HCT116 (cell line): ENCODE measurements at regions of chr7 and their contacts with region 1.

Region 1: DNA sequence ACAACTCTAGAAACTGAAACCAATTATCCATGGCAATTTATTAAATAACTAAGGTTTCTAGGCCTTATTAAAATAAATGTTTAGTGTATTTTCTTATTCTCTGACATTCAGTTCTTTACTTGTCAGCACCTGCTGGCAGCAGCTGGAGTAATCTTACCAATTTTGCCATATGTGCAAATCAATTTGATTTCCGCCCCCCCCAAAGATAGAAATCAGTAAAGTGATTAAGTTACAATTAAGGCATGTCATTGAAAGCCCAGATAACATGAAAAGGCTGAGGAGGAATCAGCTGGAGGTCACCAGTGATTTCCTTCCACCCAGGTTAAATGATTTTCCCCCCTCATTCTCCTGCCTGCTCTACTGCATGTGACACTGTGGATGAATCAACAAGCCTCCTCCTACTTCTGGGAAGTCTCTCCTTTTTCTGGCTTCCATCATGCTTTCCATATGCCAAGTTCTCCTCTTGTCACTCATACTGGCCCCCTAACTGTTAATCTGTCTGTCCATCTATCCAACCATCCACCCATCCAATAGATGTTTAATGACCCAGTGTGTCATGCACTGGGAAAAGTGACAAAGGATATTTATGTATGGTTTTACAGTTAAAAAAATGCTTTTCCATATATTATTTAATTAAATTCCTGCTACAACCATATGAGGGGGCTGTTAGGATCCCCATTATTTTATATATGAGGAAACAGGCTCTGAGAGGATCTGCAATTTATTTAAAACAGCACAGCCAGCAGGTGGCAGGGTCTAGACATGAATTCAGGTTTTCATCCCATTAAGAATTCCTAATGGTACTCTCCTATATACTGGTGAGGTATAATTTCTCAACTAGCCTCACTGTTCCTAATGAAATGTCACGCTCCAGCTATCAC is 116.5 kb downstream of the ATXN7L1 start:
- DNase-seq: peak; percentile 45
- ATAC-seq: peak; percentile 83
- H3K4me3 ChIP-seq: no peak overlapping the region
- H3K27ac ChIP-seq: no peak overlapping the region
- H3K4me1 ChIP-seq: peaks cover 0 to 13% of the 10 kb centered on the region in 2 experiments; a peak in 1 of 4 replicates
- H3K27me3 ChIP-seq: no peaks in the 10 kb centered on the region
- CTCF ChIP-seq: peak; percentile 44 to 96 (median 74)
- POLR2A ChIP-seq: no peak
- RAD21 ChIP-seq: peak; percentile 94

Region 2: GRCh38 chr7:104299323-104299722 is 1460.6 kb before region 1 on chr7:
- CTCF ChIA-PET with region 1: no interaction called
- POLR2A ChIA-PET with region 1: no interaction called
- RAD21 ChIA-PET with region 1: no interaction called
- intact Hi-C with region 1: no loop called
- DNase-seq: no peak
- ATAC-seq: no peak
- H3K4me3 ChIP-seq: no peak overlapping the region
- H3K27ac ChIP-seq: no peak overlapping the region
- H3K4me1 ChIP-seq: no peaks in the 10 kb centered on the region
- H3K27me3 ChIP-seq: peaks cover 23% of the 10 kb centered on the region
- CTCF ChIP-seq: no peak
- POLR2A ChIP-seq: no peak
- RAD21 ChIP-seq: no peak

Region 3: DNA sequence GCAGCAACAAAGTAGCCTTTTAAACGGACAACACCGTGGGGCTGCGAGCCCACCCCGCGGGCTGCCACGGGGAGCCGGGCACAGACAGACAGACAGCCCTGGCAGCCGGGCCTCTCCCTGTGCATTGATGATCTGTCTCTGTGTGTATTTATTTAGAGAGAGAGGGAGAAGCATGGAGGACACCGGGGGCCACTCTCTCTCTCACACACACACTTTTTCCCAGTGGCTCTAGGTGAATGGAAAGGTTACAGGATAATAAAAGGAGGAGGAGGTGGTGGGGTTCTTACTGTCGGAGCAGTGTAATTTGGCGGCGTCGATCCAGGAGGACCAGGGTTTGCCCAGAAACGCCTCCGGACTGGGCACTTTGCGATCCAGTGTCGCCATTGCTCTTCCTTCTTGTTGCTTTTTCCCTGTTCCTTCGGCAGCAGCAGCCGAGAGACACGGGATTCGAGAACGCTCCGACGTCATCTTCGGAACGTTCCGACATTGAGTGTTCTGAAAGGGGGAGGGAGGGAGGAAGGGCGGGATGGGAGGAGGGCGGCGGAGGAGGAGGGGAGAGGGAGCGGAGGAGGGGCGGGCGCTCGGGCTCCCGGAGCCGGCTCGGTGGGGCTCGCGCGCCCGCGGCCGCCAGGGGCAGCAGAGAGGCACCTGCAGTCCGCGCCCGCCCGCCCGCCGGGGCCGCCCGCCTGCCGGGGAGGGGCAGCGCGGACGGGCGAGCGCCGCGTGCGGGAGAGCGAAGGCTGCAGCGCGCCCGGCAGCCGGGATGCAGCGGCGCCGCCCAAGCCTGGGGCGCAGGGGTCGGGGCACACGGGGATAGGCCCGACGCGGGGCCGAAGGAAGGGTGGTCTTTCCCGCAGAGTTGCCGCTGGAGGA is 116.4 kb after region 1 on chr7 and contains the start of gene ATXN7L1:
- CTCF ChIA-PET with region 1: interaction called, 7 read pairs
- POLR2A ChIA-PET with region 1: no interaction called
- RAD21 ChIA-PET with region 1: no interaction called
- intact Hi-C with region 1: loop called (anchors 5 kb)
- DNase-seq: peak; percentile 95
- ATAC-seq: peak; percentile 89
- H3K4me3 ChIP-seq: peak within 1 kb of the TSS; percentile 87 to 92
- H3K27ac ChIP-seq: peak within 1 kb of the TSS; percentile 76
- H3K4me1 ChIP-seq: peaks cover 11 to 36% of the 10 kb centered on the region in 2 experiments
- H3K27me3 ChIP-seq: no peaks in the 10 kb centered on the region
- CTCF ChIP-seq: peak in 1 of 3 experiments; percentile 33; a peak in 1 of 6 replicates
- POLR2A ChIP-seq: peak; percentile 86
- RAD21 ChIP-seq: no peak
- total RNA-seq, gene ATXN7L1: 11.5 TPM

Region 4: GRCh38 chr7:105934572-105935185 is 174.8 kb after region 1 on chr7:
- CTCF ChIA-PET with region 1: no interaction called
- POLR2A ChIA-PET with region 1: no interaction called
- RAD21 ChIA-PET with region 1: no interaction called
- intact Hi-C with region 1: loop called (anchors 2 kb)
- DNase-seq: peak; percentile 7
- ATAC-seq: peak; percentile 83
- H3K4me3 ChIP-seq: no peak overlapping the region
- H3K27ac ChIP-seq: no peak overlapping the region
- H3K4me1 ChIP-seq: no peaks in the 10 kb centered on the region
- H3K27me3 ChIP-seq: no peaks in the 10 kb centered on the region
- CTCF ChIP-seq: peak; percentile 25 to 33 (median 29); a peak in 4 of 6 replicates
- POLR2A ChIP-seq: no peak
- RAD21 ChIP-seq: peak; percentile 56

Region 5: DNA sequence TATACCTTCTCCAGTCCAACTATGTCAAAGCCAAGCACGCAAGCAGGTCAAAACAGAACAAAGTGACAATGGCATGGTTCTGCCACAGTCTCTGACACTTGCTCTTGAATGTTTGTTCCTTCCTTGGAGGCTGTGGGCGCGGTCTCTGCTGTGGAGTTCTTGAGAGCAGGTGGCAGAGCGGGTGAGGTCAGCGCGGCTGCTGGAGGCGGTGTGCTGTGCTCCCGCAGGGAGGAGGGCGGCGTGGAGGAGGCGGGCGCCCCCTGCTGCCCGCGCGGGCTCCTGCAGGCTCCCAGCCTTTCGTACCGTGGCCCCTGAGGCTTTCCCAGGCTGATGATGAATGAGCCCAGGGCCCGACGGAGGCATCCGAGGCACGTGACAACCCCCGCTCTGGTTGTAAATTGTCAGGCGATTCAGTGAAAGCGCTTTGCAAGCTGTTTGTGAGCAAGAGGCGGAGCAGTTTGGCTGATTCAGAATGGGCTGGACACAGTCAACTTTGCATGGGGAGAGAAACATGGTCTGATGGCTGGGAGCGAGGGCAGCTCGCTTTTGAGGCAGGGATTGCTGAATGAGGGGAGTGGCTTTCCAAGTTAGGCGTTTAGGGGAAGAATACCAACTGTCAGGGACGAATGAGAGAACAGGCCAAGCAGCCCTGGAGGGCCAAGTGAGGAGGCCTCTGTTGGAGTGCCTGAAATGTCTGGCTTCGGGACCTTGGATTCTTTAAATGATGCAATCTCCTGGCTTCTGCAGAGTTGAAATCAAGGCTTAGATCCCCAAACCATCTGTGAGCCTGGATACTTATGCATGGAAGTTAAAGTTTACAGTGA is 249.7 kb after region 1 on chr7:
- CTCF ChIA-PET with region 1: interaction called, 9 read pairs
- POLR2A ChIA-PET with region 1: no interaction called
- RAD21 ChIA-PET with region 1: no interaction called
- intact Hi-C with region 1: loop called (anchors 1 kb)
- DNase-seq: peak; percentile 63
- ATAC-seq: peak; percentile 99
- H3K4me3 ChIP-seq: peak overlapping the region in 1 of 2 experiments; percentile 19; a peak in 2 of 4 replicates
- H3K27ac ChIP-seq: no peak overlapping the region
- H3K4me1 ChIP-seq: peaks cover 8 to 12% of the 10 kb centered on the region in 2 experiments; a peak in 3 of 4 replicates
- H3K27me3 ChIP-seq: no peaks in the 10 kb centered on the region
- CTCF ChIP-seq: peak; percentile 96 to 98 (median 97)
- POLR2A ChIP-seq: no peak
- RAD21 ChIP-seq: peak; percentile 98

Region 6: GRCh38 chr7:106041140-106041717 is 281.3 kb after region 1 on chr7:
- CTCF ChIA-PET with region 1: interaction called, 21 read pairs
- POLR2A ChIA-PET with region 1: no interaction called
- RAD21 ChIA-PET with region 1: no interaction called
- intact Hi-C with region 1: loop called (anchors 1 kb)
- DNase-seq: peak; percentile 47
- ATAC-seq: peak; percentile 81
- H3K4me3 ChIP-seq: no peak overlapping the region
- H3K27ac ChIP-seq: no peak overlapping the region
- H3K4me1 ChIP-seq: peaks cover 0 to 12% of the 10 kb centered on the region in 2 experiments; a peak in 2 of 4 replicates
- H3K27me3 ChIP-seq: no peaks in the 10 kb centered on the region
- CTCF ChIP-seq: peak; percentile 67 to 94 (median 88); a peak in 5 of 6 replicates
- POLR2A ChIP-seq: no peak
- RAD21 ChIP-seq: peak; percentile 51

Region 7: GRCh38 chr7:106153891-106154449 is 394.1 kb after region 1 on chr7:
- CTCF ChIA-PET with region 1: interaction called, 3 read pairs
- POLR2A ChIA-PET with region 1: no interaction called
- RAD21 ChIA-PET with region 1: interaction called in 1 of 2 experiments, 3 read pairs
- intact Hi-C with region 1: loop called (anchors 2 kb)
- DNase-seq: peak; percentile 57
- ATAC-seq: peak; percentile 100
- H3K4me3 ChIP-seq: no peak overlapping the region
- H3K27ac ChIP-seq: no peak overlapping the region
- H3K4me1 ChIP-seq: peaks cover 0 to 8% of the 10 kb centered on the region in 2 experiments; a peak in 1 of 4 replicates
- H3K27me3 ChIP-seq: 0 out of 2 replicates have a peak, but pooled peaks cover 3% of the 10 kb centered on the region
- CTCF ChIP-seq: peak; percentile 90 to 95 (median 92)
- POLR2A ChIP-seq: no peak
- RAD21 ChIP-seq: peak; percentile 99